A673 (cell line): ENCODE measurements at regions of chr13 and their contacts with region 1.

Region 1: DNA sequence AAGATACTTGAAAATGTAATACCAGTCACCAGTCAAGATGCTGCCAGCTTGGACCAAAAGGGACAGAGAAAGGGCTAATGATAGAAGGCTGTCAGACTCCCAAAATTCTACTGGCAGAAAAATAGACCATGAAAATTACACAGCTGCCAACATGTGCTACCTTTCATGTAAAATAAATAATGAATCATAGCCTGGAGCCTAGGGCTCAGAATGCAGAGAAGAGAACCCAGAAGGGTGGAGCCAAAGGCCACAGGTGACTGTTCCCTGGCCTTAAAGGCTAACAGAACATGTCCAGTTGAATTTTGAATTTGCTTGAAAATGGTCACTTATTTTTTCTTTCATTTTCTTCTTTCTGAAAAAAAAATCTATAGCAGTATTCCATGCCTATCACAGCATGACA is 1827.0 kb upstream of the MIR17HG start:
- DNase-seq: no peak
- H3K4me3 ChIP-seq: no peak overlapping the region
- H3K27ac ChIP-seq: peak overlapping the region; percentile 19
- H3K4me1 ChIP-seq: peaks cover 2% of the 10 kb centered on the region
- H3K27me3 ChIP-seq: no peaks in the 10 kb centered on the region
- CTCF ChIP-seq: no peak

Region 2: GRCh38 chr13:88862095-88862620 is 658.3 kb before region 1 on chr13:
- CTCF ChIA-PET with region 1: no interaction called
- POLR2A ChIA-PET with region 1: no interaction called
- intact Hi-C with region 1: no loop called
- DNase-seq: no peak
- H3K4me3 ChIP-seq: no peak overlapping the region
- H3K27ac ChIP-seq: no peak overlapping the region
- H3K4me1 ChIP-seq: no peaks in the 10 kb centered on the region
- H3K27me3 ChIP-seq: no peaks in the 10 kb centered on the region
- CTCF ChIP-seq: no peak

Region 3: GRCh38 chr13:89150362-89150761 is 370.1 kb before region 1 on chr13:
- CTCF ChIA-PET with region 1: no interaction called
- POLR2A ChIA-PET with region 1: no interaction called
- intact Hi-C with region 1: no loop called
- DNase-seq: no peak
- H3K4me3 ChIP-seq: no peak overlapping the region
- H3K27ac ChIP-seq: no peak overlapping the region
- H3K4me1 ChIP-seq: no peaks in the 10 kb centered on the region
- H3K27me3 ChIP-seq: no peaks in the 10 kb centered on the region
- CTCF ChIP-seq: no peak

Region 4: DNA sequence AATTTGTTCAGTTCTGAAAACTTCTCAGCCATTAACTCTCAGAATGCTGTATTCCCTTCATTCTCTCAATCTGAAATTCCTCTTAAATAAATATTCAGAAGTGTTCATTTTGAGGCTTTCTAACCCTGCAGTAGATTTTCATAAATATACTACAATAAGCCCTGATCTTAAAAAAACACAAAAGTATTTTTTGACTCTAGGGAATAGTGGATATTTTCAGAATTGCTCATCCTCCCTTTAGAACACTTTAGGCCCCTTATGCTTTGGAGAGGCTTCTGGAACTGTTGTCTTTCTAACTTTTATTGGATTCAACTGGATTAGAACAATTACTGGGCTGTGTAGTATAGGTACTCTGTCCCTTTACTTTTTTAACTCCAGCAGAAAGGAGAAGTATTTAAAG is 164.4 kb after region 1 on chr13:
- CTCF ChIA-PET with region 1: no interaction called
- POLR2A ChIA-PET with region 1: no interaction called
- intact Hi-C with region 1: loop called (anchors 5 kb)
- DNase-seq: no peak
- H3K4me3 ChIP-seq: no peak overlapping the region
- H3K27ac ChIP-seq: no peak overlapping the region
- H3K4me1 ChIP-seq: peaks cover 26% of the 10 kb centered on the region
- H3K27me3 ChIP-seq: no peaks in the 10 kb centered on the region
- CTCF ChIP-seq: no peak

Region 5: GRCh38 chr13:89968470-89968869 is 448.0 kb after region 1 on chr13:
- CTCF ChIA-PET with region 1: no interaction called
- POLR2A ChIA-PET with region 1: no interaction called
- intact Hi-C with region 1: no loop called
- DNase-seq: no peak
- H3K4me3 ChIP-seq: no peak overlapping the region
- H3K27ac ChIP-seq: no peak overlapping the region
- H3K4me1 ChIP-seq: no peaks in the 10 kb centered on the region
- H3K27me3 ChIP-seq: no peaks in the 10 kb centered on the region
- CTCF ChIP-seq: no peak